Cardiac septum (tissue), 1 donor: ENCODE measurements at regions of chr16 and their contacts with region 1.

Region 1: GRCh38 chr16:10737068-10737625 is 6.5 kb upstream of the NUBP1 start:
- DNase-seq: no peak

Region 2: DNA sequence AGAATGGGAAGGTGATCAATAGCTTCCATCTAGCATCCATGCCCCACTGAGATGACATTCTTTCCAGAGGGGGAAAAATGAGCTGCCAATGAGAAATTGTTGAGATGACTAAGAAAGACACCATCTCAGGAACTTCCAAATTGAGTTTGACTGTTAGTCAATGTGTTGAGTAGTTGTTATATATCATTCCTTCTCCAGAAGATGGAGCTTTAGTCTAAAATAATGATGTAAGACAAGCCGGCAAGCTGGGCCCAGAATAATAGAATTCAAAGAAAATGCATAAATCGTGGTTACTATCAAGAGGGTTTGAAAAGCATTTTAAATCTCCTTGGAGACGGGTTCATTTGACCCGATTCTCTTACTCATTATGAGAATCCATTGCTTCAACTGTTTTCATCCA is 422.3 kb before region 1 on chr16:
- intact Hi-C with region 1: loop called (anchors 10 kb)
- DNase-seq: no peak

Region 3: DNA sequence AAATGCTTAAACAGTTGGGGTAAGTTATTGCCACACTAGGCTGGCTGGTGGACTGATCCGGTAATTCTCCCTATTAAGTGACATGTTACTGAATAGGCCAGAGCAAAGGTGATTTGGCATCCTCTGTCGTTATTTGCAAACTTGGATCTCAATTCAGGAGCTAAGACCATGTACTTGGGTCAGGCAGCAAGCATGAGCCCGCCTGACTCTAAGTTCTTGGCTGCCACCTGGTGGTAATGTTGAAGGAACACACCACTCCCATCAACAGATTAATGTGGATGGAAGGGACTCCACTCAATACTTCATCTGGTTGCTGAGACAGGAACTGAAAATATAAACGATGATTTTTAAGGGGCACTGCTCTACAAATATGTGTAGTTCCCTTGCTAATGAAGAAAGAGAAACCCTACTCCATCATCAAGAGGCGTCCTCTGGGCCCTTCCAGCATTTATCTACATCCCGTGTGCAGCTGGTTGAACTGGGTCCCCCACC is 227.6 kb before region 1 on chr16:
- intact Hi-C with region 1: loop called (anchors 2 kb)
- DNase-seq: no peak

Region 4: DNA sequence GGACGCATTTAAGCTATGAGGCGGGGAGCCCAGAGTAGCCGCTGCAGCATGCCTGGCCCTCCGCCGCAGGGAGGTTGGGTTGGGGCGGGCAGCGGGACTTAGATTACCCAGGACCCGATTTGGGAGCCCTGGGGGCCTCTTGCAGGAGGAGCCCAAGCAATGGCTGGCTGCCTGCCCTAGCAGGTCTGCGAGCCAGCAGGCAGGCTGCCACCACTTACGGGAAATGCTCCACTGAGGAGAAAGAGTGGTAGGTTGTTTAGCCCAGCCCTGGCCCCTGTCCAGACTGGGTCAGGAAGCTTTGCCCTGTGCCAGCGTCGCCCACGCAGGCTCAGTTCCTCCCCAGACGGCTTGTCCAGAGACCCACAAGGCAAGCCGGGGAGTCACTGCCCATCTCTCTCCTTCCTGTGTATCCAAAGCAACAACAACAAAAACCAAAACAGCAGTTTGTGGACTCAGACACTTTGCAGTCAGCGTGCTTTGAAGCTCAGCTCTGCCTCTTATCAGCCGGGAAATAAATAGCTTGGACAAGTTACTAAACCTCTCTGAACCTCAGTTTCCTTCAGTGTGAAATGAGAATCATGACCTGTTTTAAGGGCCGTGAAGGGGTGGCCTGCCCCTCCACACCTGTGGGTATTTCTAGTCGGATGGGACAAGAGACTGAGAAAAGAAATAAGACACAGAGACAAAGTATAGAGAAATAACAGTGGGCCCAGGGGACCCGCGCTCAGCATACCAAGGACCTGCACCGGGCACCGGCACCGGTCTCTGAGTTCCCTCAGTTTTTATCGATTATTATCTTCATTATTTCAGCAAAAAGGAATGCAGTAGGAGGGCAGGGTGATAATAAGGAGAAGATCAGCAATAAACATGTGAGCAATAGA is 91.9 kb after region 1 on chr16:
- intact Hi-C with region 1: loop called (anchors 2 kb)
- DNase-seq: peak; percentile 95

Region 5: DNA sequence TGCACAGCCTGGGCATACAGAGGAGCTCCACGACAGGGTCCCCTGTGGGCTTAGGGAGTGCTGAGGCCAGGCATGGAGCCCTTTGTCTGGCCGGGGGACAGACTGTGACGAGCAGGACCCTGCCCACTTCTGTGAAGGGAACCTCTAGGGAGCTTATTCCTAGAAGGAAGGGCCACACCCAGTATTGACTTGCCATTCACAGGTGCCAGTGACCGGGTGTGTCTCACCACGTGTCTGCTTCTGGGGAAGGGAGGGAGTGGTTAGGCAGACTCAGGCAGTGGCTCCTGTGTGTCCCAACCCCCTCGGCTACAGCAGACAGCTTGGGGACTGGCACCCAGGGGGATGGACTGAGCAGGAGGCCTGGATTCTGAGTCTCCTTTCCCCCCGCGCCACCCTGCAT is 461.7 kb after region 1 on chr16:
- intact Hi-C with region 1: no loop called
- DNase-seq: no peak